Cardiac septum (tissue), 1 donor: ENCODE measurements at regions of chr13 and their contacts with region 1.

Region 1: DNA sequence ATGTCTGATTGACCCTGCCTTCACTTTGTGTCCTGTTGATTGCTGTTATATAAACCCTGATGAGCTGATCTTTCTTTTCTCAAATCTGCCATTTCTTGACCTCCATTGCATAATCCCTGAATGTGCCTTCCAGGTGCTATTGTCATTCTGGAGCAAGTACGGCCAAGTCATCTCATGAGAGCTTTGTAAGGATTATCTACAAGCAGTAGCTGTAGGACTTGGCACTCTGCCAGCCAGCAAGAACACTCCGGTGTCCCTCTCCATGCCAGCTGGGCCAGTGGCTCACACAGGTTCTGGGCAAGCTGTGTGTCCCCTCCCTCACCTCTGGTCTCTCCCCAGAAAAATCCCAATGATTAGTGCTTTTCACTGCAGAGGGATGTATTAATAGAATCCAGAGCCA is 348.1 kb downstream of the FOXO1 start:
- DNase-seq: no peak

Region 2: DNA sequence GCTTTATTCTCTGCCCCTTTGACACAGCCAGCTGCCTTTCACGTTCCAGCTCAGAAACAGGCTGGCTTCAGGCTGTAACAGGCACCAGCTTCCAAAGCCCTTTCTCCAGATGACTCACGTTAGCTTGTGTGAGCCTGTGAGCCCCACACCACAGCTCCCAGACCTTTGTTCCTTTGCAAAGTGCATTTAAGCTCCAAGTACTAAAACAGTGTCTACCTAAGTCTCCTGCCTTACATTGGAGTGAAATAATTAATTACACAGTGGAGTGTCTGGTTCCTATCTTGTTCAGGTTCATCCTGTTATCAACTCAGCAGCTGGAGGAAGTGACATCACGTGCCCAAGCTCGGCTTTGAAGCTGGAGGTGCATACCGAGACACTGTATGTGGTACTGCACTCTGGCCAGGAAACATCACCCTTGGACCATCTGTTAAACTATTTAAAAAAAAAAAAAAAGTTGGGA is 127.7 kb before region 1 on chr13:
- intact Hi-C with region 1: loop called (anchors 2 kb)
- DNase-seq: no peak

Region 3: GRCh38 chr13:40401911-40402776 is 83.8 kb after region 1 on chr13:
- intact Hi-C with region 1: loop called (anchors 2 kb)
- DNase-seq: peak; percentile 97

Region 4: GRCh38 chr13:40440990-40441820 is 122.8 kb after region 1 on chr13:
- intact Hi-C with region 1: loop called (anchors 5 kb)
- DNase-seq: peak; percentile 88

Region 5: GRCh38 chr13:40589285-40590109 is 271.1 kb after region 1 on chr13:
- intact Hi-C with region 1: no loop called
- DNase-seq: peak; percentile 80